ENCODE measurements at regions of chr17 and their contacts with region 1.

Region 1: GRCh38 chr17:40417609-40418427 is at the start of gene TOP2A:
- DNase-seq: peak; percentile 100
- ATAC-seq: peak; percentile 94
- H3K4me3 ChIP-seq: peak within 1 kb of the TSS; percentile 74
- H3K27ac ChIP-seq: peak within 1 kb of the TSS; percentile 92
- H3K4me1 ChIP-seq: peaks cover 7 to 15% of the 10 kb centered on the region in 2 experiments
- H3K27me3 ChIP-seq: no peaks in the 10 kb centered on the region
- CTCF ChIP-seq: no peak
- EP300 ChIP-seq: 0 out of 2 replicates have a peak, but pooled peaks have one; percentile 23
- POLR2A ChIP-seq: peak; percentile 95
- RAD21 ChIP-seq: no peak
- polyA plus RNA-seq, gene TOP2A: 175 to 259 TPM

Region 2: DNA sequence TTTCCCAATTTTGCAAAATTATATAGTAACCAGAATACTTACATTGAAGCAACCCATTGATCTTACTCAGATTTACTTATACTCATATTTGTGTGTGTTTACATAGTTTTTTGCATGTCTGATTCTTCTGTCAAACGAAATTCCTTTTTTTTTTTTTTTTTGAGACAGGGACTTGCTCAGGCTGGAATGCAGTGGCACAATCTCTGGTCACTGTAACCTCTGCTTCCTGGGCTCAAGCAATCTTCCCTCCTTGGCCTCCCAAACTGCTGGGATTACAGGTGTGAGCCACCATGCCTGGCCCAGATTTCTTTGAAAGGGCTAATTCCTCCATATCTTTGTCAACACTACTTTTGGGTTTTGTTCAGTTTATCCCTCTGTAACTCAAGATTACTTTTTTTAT is 30.1 kb before region 1 on chr17:
- CTCF ChIA-PET with region 1: no interaction called
- POLR2A ChIA-PET with region 1: interaction called, 12 read pairs
- in situ Hi-C with region 1: no loop called
- intact Hi-C with region 1: no loop called
- DNase-seq: no peak
- ATAC-seq: no peak
- H3K4me3 ChIP-seq: no peak overlapping the region
- H3K27ac ChIP-seq: no peak overlapping the region
- H3K4me1 ChIP-seq: no peaks in the 10 kb centered on the region; a peak in 1 of 5 replicates
- H3K27me3 ChIP-seq: no peaks in the 10 kb centered on the region
- CTCF ChIP-seq: no peak
- EP300 ChIP-seq: no peak
- POLR2A ChIP-seq: 0 out of 2 replicates have a peak, but pooled peaks have one; percentile 51
- RAD21 ChIP-seq: no peak

Region 3: GRCh38 chr17:40432864-40433528 is 15.2 kb after region 1 on chr17:
- CTCF ChIA-PET with region 1: interaction called, 3 read pairs
- POLR2A ChIA-PET with region 1: interaction called, 14 read pairs
- in situ Hi-C with region 1: no loop called
- intact Hi-C with region 1: no loop called
- DNase-seq: peak in 2 of 4 experiments; percentile 33 to 37
- ATAC-seq: peak; percentile 19; the same call in 2 of the 3 replicates
- H3K4me3 ChIP-seq: no peak overlapping the region
- H3K27ac ChIP-seq: no peak overlapping the region
- H3K4me1 ChIP-seq: peaks cover 21 to 24% of the 10 kb centered on the region in 2 experiments; a peak in 4 of 5 replicates
- H3K27me3 ChIP-seq: no peaks in the 10 kb centered on the region
- CTCF ChIP-seq: no peak
- EP300 ChIP-seq: no peak
- POLR2A ChIP-seq: no peak
- RAD21 ChIP-seq: no peak

Measured in K562 (cell line).